Naive thymus-derived CD4-positive, alpha-beta T cell (primary cell): ENCODE measurements at regions of chr19 and their contacts with region 1.

Region 1: DNA sequence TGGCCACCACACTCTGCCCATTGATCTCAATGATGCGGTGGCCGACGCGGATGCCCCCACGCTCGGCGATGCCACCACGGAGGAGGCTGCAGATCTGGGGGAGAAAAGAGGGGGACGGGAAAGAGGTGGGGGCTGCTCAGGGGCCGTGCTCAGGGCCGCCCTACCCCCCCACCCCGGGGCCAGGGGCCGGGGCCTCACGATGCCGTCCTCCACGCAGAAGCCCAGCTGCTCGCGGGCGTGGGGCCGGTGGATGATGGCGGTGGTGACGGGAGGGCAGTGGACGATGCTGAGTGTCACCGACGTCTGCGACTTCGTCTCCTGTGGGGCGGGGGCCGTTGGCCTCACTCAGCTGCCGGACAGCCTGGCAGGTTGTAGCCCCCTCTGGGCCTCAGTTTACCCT is 10.3 kb downstream of the APBA3 start:
- DNase-seq: no peak
- ATAC-seq: no peak
- H3K4me3 ChIP-seq: no peak overlapping the region
- H3K4me3 Mint-ChIP-seq: no peak overlapping the region
- H3K27ac ChIP-seq: no peak overlapping the region
- H3K27ac Mint-ChIP-seq: no peak overlapping the region
- H3K4me1 ChIP-seq: no peaks in the 10 kb centered on the region
- H3K4me1 Mint-ChIP-seq: peaks cover 12 to 18% (median 13%) of the 10 kb centered on the region in 7 donors
- H3K27me3 ChIP-seq: no peaks in the 10 kb centered on the region
- H3K27me3 Mint-ChIP-seq: no peaks in the 10 kb centered on the region

Region 2: GRCh38 chr19:3738477-3739220 is 12.6 kb before region 1 on chr19:
- CTCF ChIA-PET with region 1: interaction called, 3 read pairs
- POLR2A ChIA-PET with region 1: interaction called, 11 read pairs
- intact Hi-C with region 1: no loop called
- DNase-seq: no peak
- ATAC-seq: no peak
- H3K4me3 ChIP-seq: no peak overlapping the region
- H3K4me3 Mint-ChIP-seq: peak overlapping the region in 4 of 10 donors; percentile 30 to 54 (median 42)
- H3K27ac ChIP-seq: no peak overlapping the region
- H3K27ac Mint-ChIP-seq: peak overlapping the region; percentile 32 to 93 (median 71)
- H3K4me1 ChIP-seq: peaks cover 0 to 18% of the 10 kb centered on the region in 2 donors
- H3K4me1 Mint-ChIP-seq: peaks cover 3 to 20% (median 17%) of the 10 kb centered on the region in 7 donors
- H3K27me3 ChIP-seq: no peaks in the 10 kb centered on the region
- H3K27me3 Mint-ChIP-seq: no peaks in the 10 kb centered on the region